ENCODE measurements at regions of chr9 and their contacts with region 1.

Region 1: DNA sequence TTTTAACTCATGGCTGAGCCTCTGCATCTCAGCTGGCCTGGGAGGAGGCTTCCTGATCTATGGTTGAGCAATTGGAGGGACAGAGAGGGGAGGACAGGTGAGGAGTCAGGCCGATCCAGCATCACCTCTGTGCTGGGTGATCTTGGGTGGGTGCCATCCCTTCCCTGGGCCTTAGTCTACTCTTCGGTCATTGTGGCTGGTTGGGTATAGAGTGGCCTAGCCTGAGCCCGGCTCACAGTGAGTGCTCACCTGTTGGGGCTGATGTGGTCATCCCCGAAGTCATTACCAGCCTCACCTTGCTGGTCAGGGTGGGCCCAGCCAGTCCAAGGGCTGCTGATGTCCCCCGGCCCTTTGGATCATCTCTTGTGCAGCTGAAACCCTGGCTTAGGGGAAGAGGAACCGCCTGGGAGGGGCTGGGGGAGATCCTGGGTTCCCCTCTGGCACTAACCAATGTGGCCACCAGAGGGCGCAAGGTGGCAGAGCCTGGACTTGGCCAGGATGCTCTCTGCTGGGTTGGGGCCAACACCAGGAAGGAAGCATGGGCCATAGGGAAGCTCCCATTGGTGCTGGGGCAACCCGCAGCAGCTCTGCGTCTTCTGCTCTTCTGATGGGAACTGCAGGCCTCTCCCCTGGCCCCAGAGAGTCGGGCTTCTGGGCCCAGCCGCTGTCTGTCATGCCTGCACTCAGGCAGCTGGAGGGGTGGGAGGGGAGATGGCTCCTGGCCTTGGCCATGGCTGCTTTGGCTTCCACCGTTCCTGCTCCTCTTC is 17.3 kb upstream of the ODF2 start:
- DNase-seq: peak; percentile 76 to 80
- ATAC-seq: peak; percentile 91 to 97
- H3K4me3 ChIP-seq: no peak overlapping the region
- H3K27ac ChIP-seq: peak overlapping the region in 1 of 2 experiments; percentile 72; a peak in 3 of 6 replicates
- H3K4me1 ChIP-seq: peaks cover 3% of the 10 kb centered on the region; the same call in 2 of the 3 replicates
- CTCF ChIP-seq: peak; percentile 81
- EP300 ChIP-seq: no peak
- POLR2A ChIP-seq: no peak
- RAD21 ChIP-seq: peak; percentile 66 to 73

Region 2: GRCh38 chr9:128383007-128383753 is 55.3 kb before region 1 on chr9:
- CTCF ChIA-PET with region 1: interaction called, 10 read pairs
- POLR2A ChIA-PET with region 1: no interaction called
- DNase-seq: no peak
- ATAC-seq: no peak
- H3K4me3 ChIP-seq: no peak overlapping the region
- H3K27ac ChIP-seq: no peak overlapping the region
- H3K4me1 ChIP-seq: no peaks in the 10 kb centered on the region
- CTCF ChIP-seq: no peak
- EP300 ChIP-seq: no peak
- POLR2A ChIP-seq: no peak
- RAD21 ChIP-seq: no peak

Region 3: GRCh38 chr9:128448746-128449145 is 10.2 kb after region 1 on chr9:
- CTCF ChIA-PET with region 1: interaction called, 84 read pairs
- POLR2A ChIA-PET with region 1: no interaction called
- DNase-seq: no peak
- ATAC-seq: no peak
- H3K4me3 ChIP-seq: no peak overlapping the region
- H3K27ac ChIP-seq: no peak overlapping the region
- H3K4me1 ChIP-seq: no peaks in the 10 kb centered on the region
- CTCF ChIP-seq: no peak
- EP300 ChIP-seq: no peak
- POLR2A ChIP-seq: no peak
- RAD21 ChIP-seq: no peak

Region 4: DNA sequence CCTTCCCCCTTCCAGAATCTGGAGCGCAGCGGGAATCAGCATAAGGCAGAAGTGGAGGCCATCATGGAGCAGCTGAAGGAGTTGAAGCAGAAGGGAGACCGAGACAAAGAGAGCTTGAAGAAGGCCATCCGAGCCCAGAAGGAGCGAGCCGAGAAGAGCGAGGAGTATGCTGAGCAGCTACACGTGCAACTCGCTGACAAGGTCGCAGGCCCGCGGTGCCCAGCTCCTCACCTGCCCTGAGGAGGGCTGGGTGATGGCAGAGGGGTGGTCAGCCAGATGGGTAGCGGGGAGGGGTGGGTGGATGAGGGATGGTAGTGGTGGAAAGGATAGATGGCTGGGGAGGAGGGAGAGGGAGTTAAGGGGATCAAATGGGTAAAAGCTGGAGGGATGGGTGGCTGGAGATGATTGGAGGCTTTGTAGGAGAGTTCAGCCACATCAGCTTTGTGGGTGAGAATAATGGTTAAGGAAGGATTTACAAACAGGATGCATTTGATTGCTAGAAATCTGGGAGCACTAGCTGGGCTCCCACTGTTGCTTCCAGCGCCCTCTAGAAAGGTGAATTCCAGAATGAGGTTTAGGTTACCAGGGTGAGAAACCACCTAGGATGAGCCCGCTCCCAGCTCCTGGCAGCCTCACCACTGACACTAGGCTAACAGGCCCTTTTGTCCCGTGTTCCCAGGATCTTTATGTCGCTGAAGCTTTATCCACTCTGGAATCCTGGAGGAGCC is 46.3 kb after region 1 on chr9:
- CTCF ChIA-PET with region 1: interaction called, 14 read pairs
- POLR2A ChIA-PET with region 1: no interaction called
- DNase-seq: no peak
- ATAC-seq: no peak
- H3K4me3 ChIP-seq: no peak overlapping the region
- H3K27ac ChIP-seq: no peak overlapping the region
- H3K4me1 ChIP-seq: no peaks in the 10 kb centered on the region
- CTCF ChIP-seq: no peak
- EP300 ChIP-seq: no peak
- POLR2A ChIP-seq: no peak
- RAD21 ChIP-seq: no peak

Region 5: DNA sequence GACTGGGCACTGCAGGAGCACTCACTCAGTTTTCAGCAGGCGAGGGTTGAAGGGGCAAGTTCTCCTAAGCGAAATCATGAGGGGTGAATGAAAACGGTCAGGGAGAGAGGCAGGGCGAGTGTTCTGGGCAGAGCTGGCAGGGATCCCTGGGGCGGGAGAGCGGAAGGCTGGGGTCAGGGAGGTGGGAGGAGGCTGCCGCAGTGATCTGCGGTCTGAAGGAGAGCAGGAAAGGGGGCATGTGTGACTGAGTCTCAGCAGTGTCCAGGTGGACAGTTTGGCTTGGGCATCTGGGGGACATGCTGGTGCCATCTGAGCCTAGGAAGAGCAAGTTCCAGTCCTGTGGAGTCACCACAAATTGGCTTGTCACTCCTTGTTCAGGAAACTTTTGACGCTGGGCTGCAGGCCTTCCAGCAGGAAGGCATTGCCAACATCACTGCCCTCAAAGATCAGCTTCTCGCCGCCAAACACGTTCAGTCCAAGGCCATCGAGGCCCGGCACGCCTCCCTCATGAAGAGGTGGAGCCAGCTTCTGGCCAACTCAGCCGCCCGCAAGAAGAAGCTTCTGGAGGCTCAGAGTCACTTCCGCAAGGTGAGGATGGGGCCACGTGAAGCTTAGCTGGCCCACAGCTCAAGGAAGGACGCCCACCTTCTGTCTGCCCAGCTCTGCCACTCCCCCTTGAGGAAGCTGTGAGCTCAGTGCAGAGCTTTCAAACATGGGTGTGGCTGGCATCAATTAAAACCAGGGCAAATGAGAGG is 187.0 kb after region 1 on chr9:
- CTCF ChIA-PET with region 1: interaction called, 10 read pairs
- POLR2A ChIA-PET with region 1: no interaction called
- DNase-seq: no peak
- ATAC-seq: no peak
- H3K4me3 ChIP-seq: no peak overlapping the region
- H3K27ac ChIP-seq: no peak overlapping the region
- H3K4me1 ChIP-seq: peaks cover 26% of the 10 kb centered on the region
- CTCF ChIP-seq: no peak
- EP300 ChIP-seq: no peak
- POLR2A ChIP-seq: no peak
- RAD21 ChIP-seq: no peak

Measured in A549 (cell line).